GM12878 (cell line): ENCODE measurements at regions of chrX and their contacts with region 1.

Region 1: DNA sequence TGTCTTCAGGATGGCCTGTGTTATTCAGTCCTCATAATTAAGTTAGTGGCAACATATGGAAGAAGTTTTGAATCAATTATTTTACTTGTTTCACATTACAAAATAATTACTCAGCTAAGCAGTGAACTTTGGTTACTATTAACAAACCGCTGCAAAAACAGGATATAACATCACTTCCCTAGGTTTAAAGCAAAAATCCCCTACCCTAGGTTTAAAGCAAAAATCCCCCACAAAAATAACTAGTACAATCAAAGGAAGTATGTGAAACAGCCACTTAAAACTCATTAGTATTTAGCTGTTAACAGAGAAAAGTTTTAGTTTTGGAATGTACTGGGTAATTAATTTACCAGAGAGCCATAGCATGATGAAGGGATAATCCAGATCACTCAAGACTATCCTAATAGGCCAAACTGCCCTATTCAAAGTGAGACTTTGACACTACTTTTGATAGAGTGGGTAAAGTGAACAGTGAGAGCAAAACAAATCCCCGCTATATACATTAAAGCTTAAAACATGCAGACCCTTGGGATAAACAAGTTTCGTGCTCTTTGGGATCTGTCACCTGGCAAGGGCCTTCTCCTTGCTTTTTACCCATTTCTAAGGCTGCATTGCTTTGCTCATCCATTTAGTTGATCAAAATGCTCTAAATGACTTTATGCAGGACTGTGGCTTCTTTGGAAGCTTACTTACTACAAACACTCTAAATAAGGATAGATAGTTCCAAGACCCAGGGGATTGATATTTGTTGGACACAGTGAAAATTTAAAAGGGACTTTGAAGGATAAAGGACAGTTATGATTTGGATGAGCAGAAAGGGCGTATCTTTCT is 36.4 kb upstream of the GPR174 start:
- DNase-seq: peak; percentile 55
- ATAC-seq: peak; percentile 91
- H3K4me3 ChIP-seq: no peak overlapping the region
- H3K27ac ChIP-seq: peak overlapping the region; percentile 24
- H3K4me1 ChIP-seq: peaks cover 8% of the 10 kb centered on the region; the same call in 1 of the 2 replicates
- H3K27me3 ChIP-seq: no peaks in the 10 kb centered on the region
- CTCF ChIP-seq: no peak
- EP300 ChIP-seq: peak; percentile 58 to 80; a peak in 2 of 4 replicates
- POLR2A ChIP-seq: no peak
- RAD21 ChIP-seq: no peak

Region 2: GRCh38 chrX:78838711-78839110 is 269.4 kb before region 1 on chrX:
- CTCF ChIA-PET with region 1: no interaction called
- POLR2A ChIA-PET with region 1: no interaction called
- RAD21 ChIA-PET with region 1: no interaction called
- SMC1A ChIA-PET with region 1: no interaction called
- in situ Hi-C with region 1: no loop called
- intact Hi-C with region 1: no loop called
- DNase-seq: no peak
- ATAC-seq: no peak
- H3K4me3 ChIP-seq: no peak overlapping the region
- H3K27ac ChIP-seq: no peak overlapping the region
- H3K4me1 ChIP-seq: no peaks in the 10 kb centered on the region
- H3K27me3 ChIP-seq: no peaks in the 10 kb centered on the region
- CTCF ChIP-seq: no peak
- EP300 ChIP-seq: no peak
- POLR2A ChIP-seq: no peak
- RAD21 ChIP-seq: no peak

Region 3: GRCh38 chrX:78957768-78958130 is 150.4 kb before region 1 on chrX:
- CTCF ChIA-PET with region 1: interaction called, 8 read pairs
- POLR2A ChIA-PET with region 1: interaction called, 16 read pairs
- RAD21 ChIA-PET with region 1: interaction called, 4 read pairs
- SMC1A ChIA-PET with region 1: interaction called, 3 read pairs
- in situ Hi-C with region 1: no loop called
- intact Hi-C with region 1: no loop called
- DNase-seq: peak; percentile 93
- ATAC-seq: peak; percentile 84
- H3K4me3 ChIP-seq: peak overlapping the region; percentile 49; the same call in 1 of the 2 replicates
- H3K27ac ChIP-seq: peak overlapping the region; percentile 86
- H3K4me1 ChIP-seq: peaks cover 28% of the 10 kb centered on the region
- H3K27me3 ChIP-seq: no peaks in the 10 kb centered on the region
- CTCF ChIP-seq: no peak
- EP300 ChIP-seq: peak; percentile 72 to 97; a peak in 3 of 4 replicates
- POLR2A ChIP-seq: no peak
- RAD21 ChIP-seq: no peak

Region 4: DNA sequence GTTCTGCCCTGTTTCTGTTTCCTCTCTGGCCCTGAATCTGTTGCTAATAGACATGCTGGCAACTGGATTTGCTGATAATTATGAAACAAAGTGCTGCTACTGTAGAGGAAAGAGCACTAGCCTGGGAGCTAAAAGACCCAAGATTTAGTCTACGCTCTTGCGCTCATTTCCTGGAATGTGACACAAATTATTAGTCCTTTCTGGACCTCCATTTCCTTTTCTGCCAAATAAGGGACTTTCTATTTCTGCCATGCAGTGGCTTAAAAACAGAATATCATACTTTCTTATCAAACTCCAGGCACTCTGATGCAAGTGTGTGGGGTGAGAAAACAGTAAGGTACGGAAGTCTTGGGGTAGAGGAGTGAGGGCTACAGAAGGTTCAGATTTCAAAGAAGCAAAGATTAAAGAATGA is 12.0 kb before region 1 on chrX:
- CTCF ChIA-PET with region 1: interaction called, 4 read pairs
- POLR2A ChIA-PET with region 1: interaction called, 3 read pairs
- RAD21 ChIA-PET with region 1: interaction called, 7 read pairs
- SMC1A ChIA-PET with region 1: interaction called, 35 read pairs
- in situ Hi-C with region 1: no loop called
- intact Hi-C with region 1: no loop called
- DNase-seq: no peak
- ATAC-seq: no peak
- H3K4me3 ChIP-seq: no peak overlapping the region
- H3K27ac ChIP-seq: no peak overlapping the region
- H3K4me1 ChIP-seq: no peaks in the 10 kb centered on the region
- H3K27me3 ChIP-seq: no peaks in the 10 kb centered on the region
- CTCF ChIP-seq: no peak
- EP300 ChIP-seq: no peak
- POLR2A ChIP-seq: no peak
- RAD21 ChIP-seq: no peak

Region 5: DNA sequence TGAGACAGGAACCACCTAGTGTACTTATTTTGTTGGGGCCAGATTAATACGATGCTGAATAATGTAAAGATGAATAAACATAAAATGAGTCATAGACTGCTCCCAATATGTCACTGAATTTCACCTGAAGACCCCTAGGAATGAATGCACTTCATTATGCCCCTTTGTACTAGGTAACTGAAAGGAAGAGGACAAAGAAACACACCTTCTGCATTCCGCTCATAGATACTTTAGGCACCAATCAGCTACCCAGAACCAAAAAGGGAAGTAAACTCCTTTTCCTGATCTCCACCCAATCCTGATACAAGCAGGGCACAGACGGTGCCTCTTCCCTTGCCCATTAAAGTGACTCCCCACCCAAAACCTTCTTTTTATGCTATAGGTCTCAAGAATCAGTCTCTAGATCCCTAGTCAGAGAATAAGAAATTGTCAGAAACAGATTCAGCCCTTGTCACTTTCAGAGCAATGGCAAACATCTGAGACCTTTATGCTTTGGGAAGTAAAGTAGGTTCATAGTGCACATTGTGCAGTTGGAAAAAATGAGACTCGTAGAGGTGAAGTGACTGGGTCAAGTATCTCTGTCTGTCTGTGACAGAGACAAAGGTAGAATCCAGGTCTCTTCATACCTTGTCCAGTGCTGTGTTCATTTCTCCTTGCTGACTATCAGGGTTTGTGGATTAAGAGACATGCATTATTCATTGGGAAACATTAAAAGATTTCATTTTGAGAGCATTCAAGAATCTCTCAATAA is 38.7 kb after region 1 on chrX:
- CTCF ChIA-PET with region 1: interaction called, 6 read pairs
- POLR2A ChIA-PET with region 1: interaction called, 3 read pairs
- RAD21 ChIA-PET with region 1: interaction called, 43 read pairs
- SMC1A ChIA-PET with region 1: interaction called, 28 read pairs
- in situ Hi-C with region 1: no loop called
- intact Hi-C with region 1: no loop called
- DNase-seq: peak; percentile 45
- ATAC-seq: peak; percentile 52
- H3K4me3 ChIP-seq: peak overlapping the region; percentile 39
- H3K27ac ChIP-seq: peak overlapping the region; percentile 73
- H3K4me1 ChIP-seq: peaks cover 8% of the 10 kb centered on the region
- H3K27me3 ChIP-seq: no peaks in the 10 kb centered on the region
- CTCF ChIP-seq: no peak
- EP300 ChIP-seq: no peak
- POLR2A ChIP-seq: no peak
- RAD21 ChIP-seq: no peak

Region 6: GRCh38 chrX:79161655-79162054 is 53.5 kb after region 1 on chrX:
- CTCF ChIA-PET with region 1: no interaction called
- POLR2A ChIA-PET with region 1: interaction called, 14 read pairs
- RAD21 ChIA-PET with region 1: interaction called, 16 read pairs
- SMC1A ChIA-PET with region 1: interaction called, 20 read pairs
- in situ Hi-C with region 1: no loop called
- intact Hi-C with region 1: no loop called
- DNase-seq: peak; percentile 72
- ATAC-seq: peak; percentile 85
- H3K4me3 ChIP-seq: no peak overlapping the region
- H3K27ac ChIP-seq: peak overlapping the region; percentile 1; the same call in 1 of the 2 replicates
- H3K4me1 ChIP-seq: peaks cover 3% of the 10 kb centered on the region
- H3K27me3 ChIP-seq: no peaks in the 10 kb centered on the region
- CTCF ChIP-seq: no peak
- EP300 ChIP-seq: peak in 1 of 2 experiments; percentile 27; a peak in 2 of 4 replicates
- POLR2A ChIP-seq: no peak
- RAD21 ChIP-seq: no peak

Region 7: DNA sequence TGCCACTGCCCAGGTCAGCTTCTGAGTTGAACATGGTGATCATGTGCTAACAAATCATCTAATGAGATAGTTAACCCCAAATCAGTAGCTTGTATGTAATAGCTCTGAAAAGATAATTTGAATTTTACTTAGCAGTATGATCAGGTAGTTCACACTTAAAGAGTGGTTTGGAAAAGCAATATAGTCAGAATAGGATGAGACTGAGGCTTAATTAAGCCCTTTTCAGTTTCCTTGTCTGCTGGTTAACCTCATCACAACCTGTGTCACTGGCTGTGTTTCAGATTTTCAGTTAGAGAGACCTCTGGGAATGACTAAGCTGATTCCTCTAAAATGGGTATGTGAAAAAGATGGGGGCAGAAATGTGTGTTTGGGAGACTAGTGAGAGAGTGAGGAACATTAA is 74.5 kb after region 1 on chrX:
- CTCF ChIA-PET with region 1: interaction called, 3 read pairs
- POLR2A ChIA-PET with region 1: no interaction called
- RAD21 ChIA-PET with region 1: interaction called, 7 read pairs
- SMC1A ChIA-PET with region 1: interaction called, 7 read pairs
- in situ Hi-C with region 1: no loop called
- intact Hi-C with region 1: loop called (anchors 5 kb)
- DNase-seq: peak; percentile 84
- ATAC-seq: peak; percentile 93
- H3K4me3 ChIP-seq: no peak overlapping the region
- H3K27ac ChIP-seq: peak overlapping the region; percentile 57
- H3K4me1 ChIP-seq: peaks cover 12% of the 10 kb centered on the region; the same call in 1 of the 2 replicates
- H3K27me3 ChIP-seq: no peaks in the 10 kb centered on the region
- CTCF ChIP-seq: no peak
- EP300 ChIP-seq: peak; percentile 94
- POLR2A ChIP-seq: no peak
- RAD21 ChIP-seq: 0 out of 2 replicates have a peak, but pooled peaks have one; percentile 17